ENCODE measurements at regions of chr1 and their contacts with region 1.

Region 1: DNA sequence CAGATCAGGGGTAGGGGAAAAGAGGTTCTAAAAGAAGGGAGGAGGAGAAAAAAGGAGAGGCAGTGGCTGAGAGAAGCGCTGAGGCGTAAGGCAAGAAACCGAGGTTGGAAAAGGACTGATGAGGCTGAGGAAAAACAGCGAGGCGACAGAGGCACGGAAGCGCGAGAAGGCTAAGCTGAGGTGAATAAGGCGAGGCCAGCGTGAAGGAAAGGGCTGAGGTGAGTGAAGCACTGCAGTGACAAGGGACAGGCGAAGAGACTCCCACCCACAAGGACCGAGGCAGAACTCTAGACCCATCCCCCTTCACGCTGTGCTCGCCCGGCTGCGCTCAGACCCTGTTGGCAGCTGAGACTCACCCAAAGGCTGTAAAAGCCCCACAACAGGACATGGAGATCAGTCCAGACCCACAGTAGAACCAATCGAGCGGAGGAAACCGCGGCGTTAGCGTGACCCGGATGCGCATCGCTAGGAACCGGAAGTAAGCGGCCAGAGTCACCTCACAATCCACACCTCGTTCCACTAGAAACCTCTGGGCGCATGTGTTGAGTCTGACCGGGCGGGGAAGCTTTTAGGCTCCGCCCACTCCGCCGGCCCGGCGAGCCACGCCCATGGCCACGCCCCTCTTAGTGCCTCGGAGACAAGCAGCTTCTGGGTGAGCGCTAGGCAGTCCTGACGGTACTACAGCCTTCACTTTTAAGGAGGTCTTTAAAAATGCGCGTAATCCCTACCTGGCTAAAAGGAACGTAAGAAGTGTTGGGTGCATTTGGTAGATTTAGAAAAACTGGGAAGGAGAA is at the start of gene EYA3:
- DNase-seq: peak; percentile 99
- ATAC-seq: peak; percentile 93
- H3K4me3 Mint-ChIP-seq: peak within 1 kb of the TSS; percentile 98
- H3K27ac Mint-ChIP-seq: peak within 1 kb of the TSS; percentile 98
- H3K4me1 Mint-ChIP-seq: peaks cover 27% of the 10 kb centered on the region
- H3K27me3 Mint-ChIP-seq: no peaks in the 10 kb centered on the region
- total RNA-seq, gene EYA3: 30.1 to 37.1 TPM

Region 2: GRCh38 chr1:27872059-27872801 is 216.1 kb before region 1 on chr1 and contains the start of gene THEMIS2:
- CTCF ChIA-PET with region 1: interaction called, 3 read pairs
- POLR2A ChIA-PET with region 1: no interaction called
- intact Hi-C with region 1: loop called in 1 of 2 experiments (anchors 1 kb)
- DNase-seq: peak; percentile 90
- ATAC-seq: peak; percentile 81
- H3K4me3 Mint-ChIP-seq: peak within 1 kb of the TSS; percentile 87
- H3K27ac Mint-ChIP-seq: peak within 1 kb of the TSS; percentile 83
- H3K4me1 Mint-ChIP-seq: peaks cover 36% of the 10 kb centered on the region
- H3K27me3 Mint-ChIP-seq: no peaks in the 10 kb centered on the region
- total RNA-seq, gene THEMIS2: 14.2 to 16.2 TPM

Region 3: DNA sequence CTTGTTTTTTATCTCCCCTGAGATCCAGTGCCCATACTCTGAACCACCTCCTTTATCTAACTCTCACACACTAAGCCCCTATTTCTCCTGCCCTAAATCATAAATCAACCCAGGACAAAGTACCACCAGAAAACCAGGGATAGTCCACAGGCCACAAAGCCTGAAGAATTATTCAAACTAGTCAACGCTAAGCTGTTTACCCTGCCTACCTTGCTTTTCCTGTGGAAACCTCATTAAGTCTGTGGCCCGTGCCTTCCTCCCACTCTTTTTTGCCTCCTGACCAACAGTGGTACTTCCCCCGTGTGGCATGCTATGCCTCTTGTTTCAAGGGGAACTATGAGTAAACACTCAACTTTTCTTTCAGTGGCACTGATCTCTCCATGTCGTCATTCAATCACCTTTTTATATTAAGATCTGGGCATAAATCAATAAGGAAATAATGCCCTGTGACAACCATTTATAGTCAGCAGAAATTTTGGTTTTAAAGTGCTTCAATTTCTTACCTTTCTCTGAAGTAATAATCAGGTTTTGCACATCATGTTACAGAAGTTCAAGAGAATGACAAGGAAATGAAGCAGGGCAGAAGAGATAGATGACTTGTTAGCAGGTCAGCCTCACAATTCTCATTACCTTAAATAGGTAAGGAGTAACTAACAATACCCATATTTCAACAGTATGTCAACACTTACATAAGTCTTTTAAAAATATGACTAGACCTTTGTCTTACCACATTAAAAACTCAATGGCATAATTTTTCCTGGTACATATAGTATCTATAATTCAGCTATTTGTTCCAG is 32.0 kb before region 1 on chr1:
- CTCF ChIA-PET with region 1: interaction called, 7 read pairs
- POLR2A ChIA-PET with region 1: interaction called, 4 read pairs
- intact Hi-C with region 1: loop called in 1 of 2 experiments (anchors 1 kb)
- DNase-seq: peak; percentile 85
- ATAC-seq: peak; percentile 85
- H3K4me3 Mint-ChIP-seq: peak overlapping the region; percentile 1
- H3K27ac Mint-ChIP-seq: peak overlapping the region; percentile 83
- H3K4me1 Mint-ChIP-seq: peaks cover 47% of the 10 kb centered on the region
- H3K27me3 Mint-ChIP-seq: no peaks in the 10 kb centered on the region

Region 4: DNA sequence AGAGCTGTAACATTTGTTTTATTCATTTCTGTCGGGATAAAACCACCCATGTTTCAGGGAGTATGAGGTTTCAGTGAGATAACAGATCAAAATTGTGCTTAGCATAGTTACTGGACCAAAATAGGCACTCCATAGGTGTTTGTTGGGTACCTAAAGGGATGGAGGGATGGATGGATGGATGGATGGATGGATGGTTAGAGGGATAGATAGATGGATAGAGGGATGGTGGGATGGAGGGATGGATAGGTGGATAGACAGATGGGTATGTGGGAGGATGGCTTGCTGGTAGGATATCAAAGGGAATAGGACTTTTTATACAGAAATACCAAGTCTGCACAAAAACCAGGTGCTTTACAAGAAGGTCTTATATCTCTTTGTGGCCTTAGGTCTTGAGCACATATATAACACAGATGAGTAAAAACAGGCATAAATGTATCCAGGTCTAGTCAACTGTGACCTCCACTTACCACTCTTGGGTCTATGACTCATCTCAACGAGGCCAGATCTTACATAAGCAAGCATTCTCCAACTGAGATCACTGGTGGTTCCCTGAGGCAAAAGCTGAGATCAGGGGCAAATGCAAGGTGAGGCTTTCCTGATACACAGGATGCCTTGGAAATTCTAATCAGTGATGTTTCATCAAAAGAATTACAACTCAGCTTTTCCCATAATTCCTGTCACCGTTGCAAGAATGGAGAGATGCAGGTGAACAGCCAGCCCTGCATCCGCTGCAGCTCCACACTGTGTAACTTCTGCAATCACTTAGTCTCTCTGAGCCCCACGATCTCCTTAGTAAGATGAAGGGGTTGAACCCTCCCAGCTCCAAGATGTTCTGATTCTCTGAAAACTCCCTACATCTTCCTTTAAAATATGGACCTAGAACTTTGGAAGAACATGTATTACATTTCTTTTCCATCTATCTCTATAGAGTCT is 56.1 kb after region 1 on chr1:
- CTCF ChIA-PET with region 1: no interaction called
- POLR2A ChIA-PET with region 1: no interaction called
- intact Hi-C with region 1: loop called in 1 of 2 experiments (anchors 2 kb)
- DNase-seq: peak; percentile 68
- ATAC-seq: peak; percentile 97
- H3K4me3 Mint-ChIP-seq: no peak overlapping the region
- H3K27ac Mint-ChIP-seq: peak overlapping the region; percentile 34
- H3K4me1 Mint-ChIP-seq: peaks cover 19% of the 10 kb centered on the region
- H3K27me3 Mint-ChIP-seq: peaks cover 18% of the 10 kb centered on the region

Region 5: DNA sequence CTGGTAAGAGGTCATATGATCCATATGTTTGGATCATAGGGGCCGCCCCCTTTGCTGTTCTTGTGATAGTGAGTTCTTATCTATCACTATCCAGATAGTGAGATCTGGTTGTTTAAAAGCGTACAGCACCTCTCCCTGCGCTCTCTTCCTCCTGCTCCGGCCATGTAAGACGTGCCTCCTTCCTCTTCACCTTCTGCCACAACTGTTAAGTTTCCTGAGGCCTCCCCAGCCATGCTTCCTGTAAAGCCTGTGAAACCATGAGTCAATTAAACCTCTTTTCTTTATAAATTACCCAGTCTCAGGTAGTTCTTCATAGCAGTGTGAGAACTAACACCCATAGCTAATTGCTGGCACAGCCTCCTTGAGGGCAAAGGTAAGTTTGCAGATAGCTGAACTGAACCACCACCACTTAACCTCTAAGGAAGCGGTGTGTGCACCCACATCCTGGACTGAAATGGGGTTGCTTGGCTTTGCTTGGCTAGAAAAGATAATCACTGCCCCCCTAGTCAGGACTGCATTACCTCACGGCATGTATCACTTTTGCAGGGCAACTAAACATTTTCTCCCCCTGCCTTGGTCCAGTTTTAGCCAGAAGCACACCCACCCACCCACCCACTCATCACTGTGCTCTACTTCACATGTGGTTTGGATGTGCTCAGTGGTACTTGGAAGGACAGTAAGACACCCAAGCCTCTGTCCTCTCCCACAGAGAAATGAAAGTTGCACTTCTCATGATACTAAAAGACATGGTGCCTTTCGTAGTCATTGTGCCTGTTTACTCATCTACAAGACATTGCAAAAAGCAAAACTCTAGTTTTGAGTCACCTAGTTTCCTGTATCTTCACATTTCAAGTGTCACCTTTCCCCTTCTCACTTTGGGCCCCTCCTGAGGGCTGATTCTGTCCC is 111.2 kb after region 1 on chr1:
- CTCF ChIA-PET with region 1: interaction called, 13 read pairs
- POLR2A ChIA-PET with region 1: interaction called, 6 read pairs
- intact Hi-C with region 1: loop called (anchors 1 to 2 kb)
- DNase-seq: peak; percentile 84
- ATAC-seq: peak; percentile 92
- H3K4me3 Mint-ChIP-seq: peak overlapping the region; percentile 37
- H3K27ac Mint-ChIP-seq: peak overlapping the region; percentile 89
- H3K4me1 Mint-ChIP-seq: peaks cover 47% of the 10 kb centered on the region
- H3K27me3 Mint-ChIP-seq: no peaks in the 10 kb centered on the region

Region 6: DNA sequence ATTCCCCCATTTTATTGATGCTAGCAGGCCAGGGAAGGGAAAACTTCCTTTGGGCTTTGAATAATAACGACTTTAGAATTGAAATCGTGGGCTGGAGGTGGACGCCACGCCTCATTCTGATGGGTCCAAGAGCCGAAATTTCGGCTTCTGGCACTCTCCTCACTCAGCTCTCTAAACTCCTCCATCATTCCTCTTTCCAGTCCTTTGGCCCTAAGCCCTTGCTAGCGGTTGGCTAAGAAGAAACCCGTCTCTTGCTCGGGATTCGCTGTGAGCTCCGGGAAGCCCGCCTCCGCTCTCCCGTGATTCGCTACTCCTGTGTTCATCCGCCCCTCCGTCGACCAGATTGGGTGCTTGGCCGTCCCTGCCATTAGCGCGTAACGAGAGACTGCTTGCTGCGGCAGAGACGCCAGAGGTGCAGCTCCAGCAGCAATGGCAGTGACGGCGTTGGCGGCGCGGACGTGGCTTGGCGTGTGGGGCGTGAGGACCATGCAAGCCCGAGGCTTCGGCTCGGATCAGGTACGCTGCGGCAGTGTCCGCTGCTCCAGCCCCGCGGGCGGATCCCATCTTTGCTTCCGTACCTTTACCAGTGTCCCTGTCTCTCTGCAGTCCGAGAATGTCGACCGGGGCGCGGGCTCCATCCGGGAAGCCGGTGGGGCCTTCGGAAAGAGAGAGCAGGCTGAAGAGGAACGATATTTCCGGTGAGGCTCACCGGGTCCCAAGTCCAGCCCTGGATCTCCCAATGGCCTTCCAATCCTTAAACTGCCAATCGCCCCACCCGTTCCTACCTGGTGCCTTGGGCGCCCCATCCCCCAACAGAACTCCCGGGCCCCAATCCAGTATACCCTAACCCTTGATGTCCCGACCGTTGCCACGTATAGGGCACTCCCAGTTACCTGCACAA is 147.6 kb after region 1 on chr1 and contains the start of gene ATP5IF1:
- CTCF ChIA-PET with region 1: interaction called, 5 read pairs
- POLR2A ChIA-PET with region 1: interaction called, 7 read pairs
- intact Hi-C with region 1: loop called in 1 of 2 experiments (anchors 1 kb)
- DNase-seq: peak; percentile 97
- ATAC-seq: peak; percentile 97
- H3K4me3 Mint-ChIP-seq: no peak within 1 kb of the TSS
- H3K27ac Mint-ChIP-seq: no peak within 1 kb of the TSS
- H3K4me1 Mint-ChIP-seq: peaks cover 15% of the 10 kb centered on the region
- H3K27me3 Mint-ChIP-seq: no peaks in the 10 kb centered on the region
- total RNA-seq, gene ATP5IF1: 192 to 195 TPM

Region 7: DNA sequence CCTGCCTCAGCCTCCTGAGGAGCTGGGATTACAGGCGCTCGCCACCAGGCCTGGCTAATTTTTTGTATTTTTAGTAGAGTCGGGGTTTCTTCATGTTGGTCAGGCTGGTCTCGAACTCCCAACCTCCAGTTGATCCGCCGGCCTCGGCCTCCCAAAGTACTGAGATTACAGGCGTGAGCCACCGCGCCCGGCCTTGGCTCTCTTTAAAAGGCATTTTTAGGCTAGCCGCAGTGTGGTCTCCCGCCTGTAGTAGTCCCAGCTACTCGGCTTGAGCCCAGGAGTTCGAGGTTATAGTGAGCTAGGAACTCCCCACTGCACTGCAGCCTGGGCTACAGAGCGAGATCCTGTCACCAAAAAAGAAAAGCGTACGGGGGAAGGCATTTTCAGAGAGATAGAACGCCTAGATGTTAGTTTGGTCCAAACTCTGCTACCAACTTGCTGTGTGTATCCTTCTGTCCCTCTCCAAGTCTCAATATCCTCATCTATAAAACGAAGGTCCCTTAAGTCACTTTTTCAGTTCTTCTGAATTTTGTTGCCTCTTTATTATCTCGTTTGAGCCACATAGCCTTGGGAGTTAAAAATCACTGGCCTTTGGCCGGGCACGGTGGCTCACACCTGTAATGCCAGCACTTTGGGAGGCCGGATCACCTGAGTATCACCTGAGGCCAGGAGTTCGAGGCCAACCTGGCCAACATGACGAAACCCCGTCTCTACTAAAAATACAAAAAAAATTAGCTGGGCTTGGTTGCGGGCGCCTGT is 241.2 kb after region 1 on chr1:
- CTCF ChIA-PET with region 1: no interaction called
- POLR2A ChIA-PET with region 1: interaction called, 7 read pairs
- intact Hi-C with region 1: loop called in 1 of 2 experiments (anchors 1 kb)
- DNase-seq: peak; percentile 61
- ATAC-seq: peak; percentile 19
- H3K4me3 Mint-ChIP-seq: peak overlapping the region; percentile 96
- H3K27ac Mint-ChIP-seq: peak overlapping the region; percentile 97
- H3K4me1 Mint-ChIP-seq: peaks cover 39% of the 10 kb centered on the region
- H3K27me3 Mint-ChIP-seq: no peaks in the 10 kb centered on the region

Measured in activated CD4-positive, alpha-beta T cell treated with anti-CD3 and anti-CD28 coated beads for 36 hours (primary cell).